ENCODE measurements at regions of chr9 and their contacts with region 1.

Region 1: GRCh38 chr9:3359048-3359692 is 166.6 kb downstream of the RFX3 start:
- DNase-seq: no peak
- ATAC-seq: no peak
- H3K4me3 ChIP-seq: no peak overlapping the region
- H3K27ac ChIP-seq: no peak overlapping the region
- H3K4me1 ChIP-seq: peaks cover 0 to 25% (median 0%) of the 10 kb centered on the region in 9 donors
- H3K27me3 ChIP-seq: no peaks in the 10 kb centered on the region
- CTCF ChIP-seq: no peak

Region 2: DNA sequence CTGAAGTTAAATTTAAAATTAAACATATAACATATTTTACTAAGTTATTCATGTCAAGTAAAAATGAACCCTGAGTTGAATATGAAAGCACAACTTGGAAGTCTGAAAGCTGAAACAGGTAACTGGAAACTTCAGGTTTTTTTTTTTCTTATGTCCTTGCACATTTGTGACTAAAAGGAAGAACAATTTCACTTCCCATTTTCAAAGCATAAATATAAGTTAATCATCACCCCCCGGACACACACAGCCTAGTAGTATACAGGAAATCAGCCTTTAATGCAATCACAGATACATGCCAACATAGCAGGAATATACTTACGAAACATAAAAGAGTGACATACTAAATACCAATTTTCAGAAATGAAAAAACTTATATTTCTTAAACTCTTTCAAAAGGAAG is 59.3 kb before region 1 on chr9:
- intact Hi-C with region 1: loop called in 1 of 10 experiments (anchors 10 kb)
- DNase-seq: no peak
- ATAC-seq: no peak
- H3K4me3 ChIP-seq: no peak overlapping the region
- H3K27ac ChIP-seq: no peak overlapping the region
- H3K4me1 ChIP-seq: no peaks in the 10 kb centered on the region
- H3K27me3 ChIP-seq: no peaks in the 10 kb centered on the region
- CTCF ChIP-seq: no peak

Measured in heart right ventricle (tissue), 16 donors.